Heart right ventricle (tissue), 16 donors: ENCODE measurements at regions of chr7 and their contacts with region 1.

Region 1: DNA sequence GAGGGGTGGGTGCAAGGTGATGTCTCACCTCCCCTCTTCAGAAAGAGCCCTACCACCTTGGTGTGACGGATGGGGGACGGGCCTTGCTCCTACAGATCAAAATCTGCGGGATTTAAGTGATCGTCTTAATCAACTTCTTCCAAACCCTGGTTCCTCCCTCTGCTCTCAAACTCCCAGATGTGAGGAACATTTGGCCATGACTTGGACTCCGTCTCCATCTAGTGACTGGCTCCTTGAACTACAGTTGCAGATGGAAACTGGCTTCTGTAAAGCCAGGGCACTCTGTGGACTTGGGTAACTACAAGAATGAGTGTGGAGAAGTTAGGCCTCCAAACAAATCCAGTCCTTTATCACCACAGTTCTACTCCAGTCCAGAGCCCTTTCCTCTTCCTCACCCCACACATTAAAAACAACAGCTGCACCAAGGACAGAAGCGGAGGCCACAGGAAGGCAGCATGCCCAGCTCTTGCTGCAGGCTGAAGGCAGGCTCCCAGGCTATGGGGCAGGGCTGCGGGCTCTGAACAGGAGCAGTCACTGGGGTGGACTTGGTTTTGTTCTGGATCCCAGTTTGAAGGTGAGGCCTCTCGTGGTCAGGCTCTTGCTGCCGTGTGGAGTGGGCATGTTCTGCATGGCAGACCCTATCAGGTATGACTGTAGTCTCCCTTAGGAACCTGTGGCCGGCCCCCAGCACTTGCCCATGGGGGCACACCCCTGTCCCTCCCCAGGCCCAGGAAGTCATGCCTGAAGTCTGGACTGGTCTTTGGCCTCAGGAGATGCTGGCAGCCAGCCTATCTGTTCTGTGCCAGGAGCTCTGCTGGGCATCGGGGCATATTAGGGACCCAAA is 79.4 kb downstream of the VWC2 start:
- DNase-seq: peak in 1 of 2 donors; percentile 31
- ATAC-seq: peak; percentile 27 to 81 (median 70)
- H3K4me3 ChIP-seq: no peak overlapping the region
- H3K27ac ChIP-seq: peak overlapping the region in 1 of 10 donors; percentile 9
- H3K4me1 ChIP-seq: peaks cover 0 to 26% (median 3%) of the 10 kb centered on the region in 9 donors
- H3K27me3 ChIP-seq: no peaks in the 10 kb centered on the region
- CTCF ChIP-seq: peak; percentile 37 to 77 (median 69)

Region 2: GRCh38 chr7:48299580-48300169 is 1553.2 kb before region 1 on chr7:
- intact Hi-C with region 1: loop called in 3 of 10 experiments (anchors 10 kb)
- DNase-seq: peak in 1 of 2 donors; percentile 47
- ATAC-seq: peak in 5 of 8 donors; percentile 55 to 76 (median 64)
- H3K4me3 ChIP-seq: no peak overlapping the region
- H3K27ac ChIP-seq: no peak overlapping the region
- H3K4me1 ChIP-seq: no peaks in the 10 kb centered on the region
- H3K27me3 ChIP-seq: peaks cover 0 to 6% (median 0%) of the 10 kb centered on the region in 7 donors
- CTCF ChIP-seq: peak; percentile 38 to 76 (median 67)

Region 3: DNA sequence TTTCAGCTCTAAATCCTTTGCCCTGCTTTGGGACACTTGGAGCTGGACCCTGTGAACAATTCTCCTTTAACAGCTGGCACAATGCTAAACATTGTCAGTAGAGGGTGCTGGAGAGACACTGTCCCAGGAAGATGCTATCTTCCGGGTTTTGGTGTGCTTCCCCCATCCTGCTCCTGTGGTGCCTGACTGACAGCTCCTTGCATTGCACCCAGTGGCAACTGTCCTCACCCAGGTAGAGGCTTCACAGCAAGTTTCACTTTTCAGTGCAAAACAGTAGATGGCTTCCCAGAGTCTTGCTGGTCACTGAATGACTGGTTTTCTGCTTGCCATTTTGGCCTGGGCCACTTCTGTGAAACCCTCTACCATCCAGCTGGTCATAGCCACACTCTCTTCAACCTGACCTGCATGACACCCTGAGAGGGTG is 851.2 kb before region 1 on chr7:
- intact Hi-C with region 1: loop called in 3 of 10 experiments (anchors 5 to 10 kb)
- DNase-seq: no peak
- ATAC-seq: peak in 4 of 8 donors; percentile 42 to 79 (median 62)
- H3K4me3 ChIP-seq: no peak overlapping the region
- H3K27ac ChIP-seq: no peak overlapping the region
- H3K4me1 ChIP-seq: no peaks in the 10 kb centered on the region
- H3K27me3 ChIP-seq: no peaks in the 10 kb centered on the region
- CTCF ChIP-seq: peak in 8 of 9 donors; percentile 30 to 62 (median 52)

Region 4: GRCh38 chr7:49279891-49280290 is 573.0 kb before region 1 on chr7:
- intact Hi-C with region 1: loop called in 1 of 10 experiments (anchors 10 kb)
- DNase-seq: no peak
- ATAC-seq: no peak
- H3K4me3 ChIP-seq: no peak overlapping the region
- H3K27ac ChIP-seq: no peak overlapping the region
- H3K4me1 ChIP-seq: no peaks in the 10 kb centered on the region
- H3K27me3 ChIP-seq: no peaks in the 10 kb centered on the region
- CTCF ChIP-seq: no peak

Region 5: GRCh38 chr7:49635800-49636199 is 217.0 kb before region 1 on chr7:
- intact Hi-C with region 1: loop called in 1 of 10 experiments (anchors 5 kb)
- DNase-seq: no peak
- ATAC-seq: no peak
- H3K4me3 ChIP-seq: no peak overlapping the region
- H3K27ac ChIP-seq: no peak overlapping the region
- H3K4me1 ChIP-seq: peaks cover 0 to 20% (median 9%) of the 10 kb centered on the region in 9 donors
- H3K27me3 ChIP-seq: no peaks in the 10 kb centered on the region
- CTCF ChIP-seq: peak in 8 of 9 donors; percentile 8 to 37 (median 19)

Region 6: DNA sequence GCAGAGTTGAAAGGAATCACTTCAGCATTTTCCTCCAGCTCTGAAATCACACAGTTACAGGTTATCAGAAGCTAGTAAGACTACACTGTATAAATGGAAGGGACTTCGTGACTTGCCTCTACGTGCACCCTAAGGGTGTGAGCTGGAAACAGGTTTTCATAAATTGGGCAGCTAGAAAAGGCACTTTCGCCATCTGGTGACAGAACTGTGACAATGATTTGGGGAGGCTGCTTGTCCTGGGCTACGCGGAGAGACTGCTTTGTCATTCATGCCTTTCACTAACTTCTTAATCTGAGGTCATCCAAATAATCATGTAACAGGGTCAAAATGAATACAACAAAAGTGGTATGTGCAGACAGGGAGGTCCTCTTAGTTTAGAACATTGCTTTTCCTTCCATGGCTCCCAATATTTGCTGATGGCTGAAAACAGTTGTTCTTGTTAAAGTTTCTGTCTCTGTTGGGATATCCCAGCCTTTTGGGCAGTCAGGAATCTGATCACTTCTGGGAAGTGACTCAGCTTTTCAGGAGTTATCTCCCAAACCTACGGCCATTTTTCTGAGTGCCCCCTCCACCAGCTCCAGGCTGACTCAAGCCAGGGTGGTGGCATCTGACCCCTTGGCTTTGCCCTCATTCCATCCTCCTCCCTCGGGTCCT is 61.6 kb before region 1 on chr7:
- intact Hi-C with region 1: loop called in 1 of 10 experiments (anchors 10 kb)
- DNase-seq: peak in 1 of 2 donors; percentile 33
- ATAC-seq: peak; percentile 75 to 88 (median 79)
- H3K4me3 ChIP-seq: no peak overlapping the region
- H3K27ac ChIP-seq: peak overlapping the region in 6 of 10 donors; percentile 17 to 60 (median 35)
- H3K4me1 ChIP-seq: peaks cover 0 to 41% (median 14%) of the 10 kb centered on the region in 9 donors
- H3K27me3 ChIP-seq: no peaks in the 10 kb centered on the region
- CTCF ChIP-seq: peak; percentile 13 to 69 (median 51)

Region 7: DNA sequence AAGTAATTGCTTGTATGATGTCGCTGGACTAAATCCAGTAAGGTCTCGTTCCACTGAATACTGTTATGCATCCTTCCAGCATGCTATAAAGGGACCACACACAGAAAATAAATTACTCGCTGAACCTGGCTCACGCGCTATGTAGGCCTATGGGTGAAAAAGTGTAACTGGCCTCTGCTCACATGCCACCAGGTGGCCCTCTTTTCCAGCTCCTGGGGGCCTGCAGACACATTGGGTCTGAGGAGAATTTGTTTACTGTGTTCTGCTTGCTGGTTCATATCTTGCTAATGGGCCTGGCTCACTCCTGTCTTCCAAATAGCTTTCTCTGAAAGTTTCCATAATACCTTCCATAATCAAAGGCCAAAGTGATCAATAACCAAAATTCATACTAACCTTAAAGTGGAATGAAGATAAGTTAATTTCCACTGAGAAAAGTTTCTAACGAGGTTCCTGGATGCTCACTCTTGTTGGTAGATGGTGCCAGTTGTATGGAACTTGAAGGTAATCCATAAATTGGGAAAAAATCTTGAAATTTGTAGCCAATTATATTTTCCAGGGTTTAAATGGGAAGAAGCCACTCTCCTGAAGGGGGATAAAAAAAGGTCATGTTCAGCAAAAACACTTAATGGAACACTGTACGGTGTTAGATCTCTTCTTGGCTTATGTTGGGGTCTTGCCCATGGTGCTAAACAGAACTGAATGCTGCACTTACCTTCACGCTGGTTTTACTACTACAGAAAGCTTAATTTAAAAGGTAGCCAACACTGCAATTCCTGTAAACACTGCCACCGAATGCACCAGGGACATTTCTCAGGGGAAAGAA is 267.2 kb after region 1 on chr7:
- intact Hi-C with region 1: no loop called
- DNase-seq: no peak
- ATAC-seq: no peak
- H3K4me3 ChIP-seq: no peak overlapping the region
- H3K27ac ChIP-seq: no peak overlapping the region
- H3K4me1 ChIP-seq: no peaks in the 10 kb centered on the region
- H3K27me3 ChIP-seq: peaks cover 0 to 11% (median 5%) of the 10 kb centered on the region in 7 donors
- CTCF ChIP-seq: peak in 1 of 9 donors; percentile 10